Posterior vena cava (tissue), 2 donors: ENCODE measurements at regions of chr9 and their contacts with region 1.

Region 1: GRCh38 chr9:86721843-86722711 is 225.2 kb downstream of the GAS1 start:
- DNase-seq: no peak

Region 2: GRCh38 chr9:86674487-86674886 is 47.6 kb before region 1 on chr9:
- intact Hi-C with region 1: loop called in 1 of 2 experiments (anchors 1 kb)
- DNase-seq: no peak

Region 3: DNA sequence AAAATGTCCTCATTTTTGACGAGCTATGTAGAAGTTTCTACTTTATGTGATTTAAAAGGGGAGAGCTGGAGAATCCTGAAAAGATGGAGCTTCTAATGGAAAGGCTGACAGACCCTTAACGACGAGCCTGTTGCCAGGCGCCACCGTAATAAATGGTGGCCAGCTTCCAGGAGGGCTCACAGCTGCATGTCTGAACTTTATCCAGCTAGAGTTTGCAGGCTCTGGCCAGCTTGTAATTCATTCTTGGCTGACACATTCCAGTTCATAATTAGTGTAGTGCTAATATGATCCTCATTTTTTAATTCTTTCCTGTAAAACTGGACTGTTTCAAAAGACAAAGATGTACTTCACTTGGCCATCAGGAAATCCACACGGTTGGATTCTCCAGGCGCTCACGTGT is 21.4 kb before region 1 on chr9:
- intact Hi-C with region 1: no loop called
- DNase-seq: peak; percentile 91